G401 (cell line): ENCODE measurements at regions of chr6 and their contacts with region 1.

Region 1: DNA sequence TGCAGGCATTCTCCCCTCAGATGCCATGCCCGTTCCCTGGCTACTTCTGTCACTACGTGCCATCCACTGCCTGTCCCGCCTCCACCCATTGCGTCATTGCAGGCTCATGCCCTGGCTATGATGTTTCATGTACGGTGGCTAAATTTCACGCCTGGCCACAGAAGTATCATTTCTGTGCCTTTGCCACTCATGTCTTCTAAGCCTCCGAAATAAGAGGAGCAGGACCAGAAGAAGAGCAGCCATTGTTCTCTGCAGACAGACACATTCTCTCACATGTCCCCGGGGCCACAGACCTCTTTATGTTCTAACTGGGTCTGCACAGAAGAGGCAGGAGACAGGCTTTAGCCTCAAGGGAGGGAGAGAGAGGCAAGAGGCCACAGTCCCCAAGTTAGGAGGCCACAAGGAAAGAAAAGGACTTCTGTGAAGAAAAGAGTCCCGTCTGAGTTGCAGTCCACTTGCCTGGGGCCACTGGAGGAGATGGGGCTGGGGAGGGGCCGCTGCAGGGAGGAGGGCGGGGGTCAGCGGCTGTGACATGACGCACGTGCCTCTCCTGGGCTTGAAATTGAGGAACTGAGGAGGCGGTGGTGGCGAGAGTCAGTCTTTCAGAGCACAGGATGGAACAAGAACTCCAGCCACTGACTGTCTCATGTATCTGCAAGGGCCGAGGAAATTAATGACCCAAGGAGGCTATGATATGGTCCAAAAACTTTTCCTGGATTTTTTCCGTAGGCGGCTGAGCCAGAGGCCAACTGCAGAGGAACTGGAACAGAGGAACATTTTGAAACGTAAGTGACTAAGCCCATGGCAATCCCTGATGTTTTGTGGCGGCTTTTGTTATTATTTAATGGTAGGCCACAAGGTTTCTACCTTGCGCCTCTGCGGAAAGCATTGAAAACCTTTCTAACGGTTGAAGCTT is 55.9 kb downstream of the TBC1D7 start:
- DNase-seq: no peak

Region 2: DNA sequence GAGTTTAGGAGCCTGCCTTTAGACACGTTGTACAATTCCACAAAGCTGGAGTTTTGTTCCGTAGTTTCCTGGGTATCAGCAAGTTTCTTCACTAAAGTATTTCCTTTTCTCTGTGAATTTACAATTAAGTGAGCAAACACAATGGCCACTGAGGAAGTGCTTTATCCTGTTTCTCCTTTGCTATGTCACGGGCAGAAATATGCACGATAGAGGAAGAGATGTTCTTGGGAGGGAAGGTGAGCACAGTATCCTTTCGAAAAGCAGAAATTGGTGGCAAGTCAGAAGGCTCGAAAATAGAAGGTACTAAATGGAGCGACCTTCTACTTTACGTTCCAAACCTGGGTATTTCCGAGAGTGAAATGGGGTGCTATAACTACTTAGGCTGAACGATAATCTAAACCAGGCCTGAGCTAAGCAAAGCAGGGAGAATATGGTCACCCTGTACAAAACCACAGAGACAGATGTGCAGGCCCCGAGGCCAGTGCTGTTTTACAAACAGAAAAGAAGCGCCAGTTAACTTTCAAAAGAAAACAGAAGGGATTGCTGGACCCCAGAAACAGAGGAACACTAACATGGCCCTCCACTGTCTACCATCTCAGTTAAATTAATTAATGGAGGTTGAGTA is 203.7 kb before region 1 on chr6:
- in situ Hi-C with region 1: loop called (anchors 10 kb)
- DNase-seq: no peak